ENCODE measurements at regions of chr17 and their contacts with region 1.

Region 1: GRCh38 chr17:80426681-80427326 is 11.8 kb downstream of the ENDOV start:
- DNase-seq: peak; percentile 61 to 75
- H3K4me3 ChIP-seq: no peak overlapping the region
- H3K27ac ChIP-seq: no peak overlapping the region
- H3K4me1 ChIP-seq: no peaks in the 10 kb centered on the region
- H3K27me3 ChIP-seq: no peaks in the 10 kb centered on the region
- CTCF ChIP-seq: peak; percentile 95 to 98 (median 98)
- POLR2A ChIP-seq: no peak

Region 2: GRCh38 chr17:80512233-80512632 is 85.4 kb after region 1 on chr17:
- intact Hi-C with region 1: no loop called
- DNase-seq: no peak
- H3K4me3 ChIP-seq: no peak overlapping the region
- H3K27ac ChIP-seq: no peak overlapping the region
- H3K4me1 ChIP-seq: no peaks in the 10 kb centered on the region
- H3K27me3 ChIP-seq: no peaks in the 10 kb centered on the region
- CTCF ChIP-seq: no peak
- POLR2A ChIP-seq: no peak

Region 3: GRCh38 chr17:80855948-80856862 is 429.4 kb after region 1 on chr17:
- intact Hi-C with region 1: loop called (anchors 10 kb)
- DNase-seq: peak in 1 of 2 donors; percentile 62
- H3K4me3 ChIP-seq: no peak overlapping the region
- H3K27ac ChIP-seq: peak overlapping the region in 1 of 2 donors; percentile 50
- H3K4me1 ChIP-seq: no peaks in the 10 kb centered on the region
- H3K27me3 ChIP-seq: no peaks in the 10 kb centered on the region
- CTCF ChIP-seq: no peak
- POLR2A ChIP-seq: no peak

Region 4: GRCh38 chr17:80981062-80981902 is 554.5 kb after region 1 on chr17:
- intact Hi-C with region 1: loop called (anchors 2 kb)
- DNase-seq: no peak
- H3K4me3 ChIP-seq: no peak overlapping the region
- H3K27ac ChIP-seq: no peak overlapping the region
- H3K4me1 ChIP-seq: peaks cover 3 to 8% of the 10 kb centered on the region in 2 donors
- H3K27me3 ChIP-seq: no peaks in the 10 kb centered on the region
- CTCF ChIP-seq: peak; percentile 60 to 96 (median 92)
- POLR2A ChIP-seq: no peak

Measured in uterus (tissue), 4 donors.